ENCODE measurements at regions of chr14 and their contacts with region 1.

Region 1: DNA sequence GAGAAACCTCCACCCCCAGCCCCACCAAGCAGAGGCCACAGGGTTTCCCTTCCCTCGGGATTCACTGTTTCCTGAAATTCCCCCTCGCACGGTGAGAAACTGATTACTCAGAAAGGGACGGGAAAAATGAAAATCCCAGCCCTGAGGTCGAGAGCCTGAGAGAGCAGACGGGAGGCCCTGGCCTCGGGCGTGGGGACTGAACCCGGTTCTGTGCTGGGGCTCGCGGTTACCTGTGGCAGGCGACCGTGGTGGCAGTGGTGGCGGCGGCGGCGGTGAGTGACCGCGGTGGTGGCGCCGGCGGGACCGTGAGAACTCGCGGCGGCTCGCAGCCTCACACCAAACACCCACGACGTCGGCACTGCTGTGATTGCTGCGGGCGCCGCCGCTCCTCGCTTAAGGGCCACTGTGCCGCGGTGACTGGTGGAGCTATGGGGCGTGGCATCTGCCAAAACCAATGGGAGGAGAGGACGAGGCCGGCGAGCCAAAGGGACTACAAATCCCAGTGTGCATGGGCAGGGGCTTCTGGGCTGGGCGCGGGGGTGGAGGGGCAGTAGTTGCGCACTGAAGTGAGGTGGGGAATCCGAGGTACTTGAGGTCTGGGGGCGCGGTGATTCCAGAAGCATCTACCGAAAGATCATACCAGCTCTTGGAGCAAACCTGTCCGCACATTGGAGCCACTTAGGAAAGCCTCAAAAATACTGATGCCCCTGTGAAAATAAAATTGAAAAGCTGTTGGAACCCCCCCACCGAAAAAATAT is at the start of gene LGMN:
- DNase-seq: peak; percentile 88
- ATAC-seq: peak; percentile 99
- H3K4me3 ChIP-seq: peak within 1 kb of the TSS; percentile 78 to 92
- H3K27ac ChIP-seq: peak within 1 kb of the TSS; percentile 45; the same call in 1 of the 2 replicates
- H3K4me1 ChIP-seq: peaks cover 6 to 20% of the 10 kb centered on the region in 2 experiments; a peak in 3 of 4 replicates
- H3K27me3 ChIP-seq: no peaks in the 10 kb centered on the region
- CTCF ChIP-seq: no peak
- POLR2A ChIP-seq: peak; percentile 92
- RAD21 ChIP-seq: no peak
- total RNA-seq, gene LGMN: 44.9 TPM

Region 2: GRCh38 chr14:91836119-91836881 is 912.1 kb before region 1 on chr14:
- CTCF ChIA-PET with region 1: no interaction called
- POLR2A ChIA-PET with region 1: no interaction called
- RAD21 ChIA-PET with region 1: no interaction called
- intact Hi-C with region 1: no loop called
- DNase-seq: peak; percentile 56
- ATAC-seq: peak; percentile 97
- H3K4me3 ChIP-seq: peak overlapping the region; percentile 52 to 66
- H3K27ac ChIP-seq: no peak overlapping the region; the same call in 1 of the 2 replicates
- H3K4me1 ChIP-seq: peaks cover 5 to 15% of the 10 kb centered on the region in 2 experiments; a peak in 3 of 4 replicates
- H3K27me3 ChIP-seq: peaks cover 16% of the 10 kb centered on the region; the same call in 1 of the 2 replicates
- CTCF ChIP-seq: no peak
- POLR2A ChIP-seq: no peak
- RAD21 ChIP-seq: no peak

Region 3: DNA sequence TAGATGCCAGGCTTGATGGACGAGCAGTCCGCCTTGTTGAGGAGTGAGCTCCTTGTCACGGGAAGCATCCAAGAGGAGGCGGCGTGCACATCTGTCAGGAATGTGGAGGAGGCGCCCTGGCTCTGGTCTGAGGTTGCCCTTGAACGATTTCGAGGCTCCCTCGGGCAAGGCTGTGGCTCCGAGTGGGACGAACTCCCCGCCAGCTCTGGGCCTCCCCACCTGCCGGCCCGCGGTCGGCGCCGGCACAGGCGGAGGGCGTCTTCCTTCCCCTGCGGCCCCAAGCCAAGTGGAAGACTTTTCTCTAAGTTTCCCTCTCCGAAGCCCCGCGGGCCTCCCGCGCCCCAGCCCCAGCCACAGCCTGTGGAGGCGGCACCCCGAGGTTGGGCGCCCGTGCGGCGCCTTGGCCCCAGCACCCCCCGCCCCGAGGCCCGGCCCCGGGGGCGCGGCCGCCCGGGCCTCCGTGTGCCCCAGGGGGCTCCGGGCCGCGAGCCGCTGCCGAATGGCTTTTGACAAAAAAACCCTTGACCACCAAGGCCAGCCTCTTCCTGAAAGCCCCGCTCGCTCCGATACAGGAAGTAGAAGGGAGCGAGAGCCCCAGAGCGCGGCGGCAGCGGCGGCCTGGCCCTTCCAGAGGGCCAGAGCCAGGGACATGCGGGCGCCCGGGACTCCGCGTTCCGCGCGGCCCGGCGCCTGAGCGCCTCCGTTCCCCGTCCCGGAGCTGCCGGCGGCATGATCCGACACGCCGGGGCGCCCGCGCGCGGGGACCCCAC is 235.0 kb before region 1 on chr14 and contains the start of gene RIN3:
- CTCF ChIA-PET with region 1: no interaction called
- POLR2A ChIA-PET with region 1: no interaction called
- RAD21 ChIA-PET with region 1: no interaction called
- intact Hi-C with region 1: no loop called
- DNase-seq: no peak
- ATAC-seq: peak; percentile 53
- H3K4me3 ChIP-seq: peak within 1 kb of the TSS; percentile 72 to 75
- H3K27ac ChIP-seq: peak within 1 kb of the TSS; percentile 69
- H3K4me1 ChIP-seq: peaks cover 27 to 42% of the 10 kb centered on the region in 2 experiments
- H3K27me3 ChIP-seq: no peaks in the 10 kb centered on the region
- CTCF ChIP-seq: no peak
- POLR2A ChIP-seq: no peak
- RAD21 ChIP-seq: no peak
- total RNA-seq, gene RIN3: 22.2 TPM

Region 4: DNA sequence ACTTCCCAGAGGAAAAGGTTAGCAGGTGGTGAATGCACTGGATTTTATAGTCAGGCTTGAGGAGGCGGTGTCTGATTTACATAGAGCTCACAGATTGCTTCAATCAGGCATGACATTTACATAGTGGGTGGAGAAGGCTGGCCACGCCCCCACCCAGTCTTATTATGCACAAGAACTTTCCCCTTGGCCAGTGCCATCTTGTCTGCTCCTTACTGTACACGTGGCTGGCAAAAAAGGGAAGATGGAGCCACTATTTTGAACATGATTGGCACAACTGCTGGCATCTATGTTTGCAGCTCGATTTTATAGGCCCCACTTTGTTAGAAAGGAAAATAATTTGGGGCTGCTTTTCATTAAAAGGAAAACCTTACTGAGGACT is 10.9 kb after region 1 on chr14:
- CTCF ChIA-PET with region 1: interaction called, 5 read pairs
- POLR2A ChIA-PET with region 1: interaction called, 19 read pairs
- RAD21 ChIA-PET with region 1: no interaction called
- intact Hi-C with region 1: no loop called
- DNase-seq: no peak
- ATAC-seq: peak; percentile 63
- H3K4me3 ChIP-seq: no peak overlapping the region; a peak in 1 of 4 replicates
- H3K27ac ChIP-seq: peak overlapping the region; percentile 54; the same call in 1 of the 2 replicates
- H3K4me1 ChIP-seq: peaks cover 10 to 41% of the 10 kb centered on the region in 2 experiments
- H3K27me3 ChIP-seq: no peaks in the 10 kb centered on the region
- CTCF ChIP-seq: no peak
- POLR2A ChIP-seq: no peak
- RAD21 ChIP-seq: no peak

Region 5: DNA sequence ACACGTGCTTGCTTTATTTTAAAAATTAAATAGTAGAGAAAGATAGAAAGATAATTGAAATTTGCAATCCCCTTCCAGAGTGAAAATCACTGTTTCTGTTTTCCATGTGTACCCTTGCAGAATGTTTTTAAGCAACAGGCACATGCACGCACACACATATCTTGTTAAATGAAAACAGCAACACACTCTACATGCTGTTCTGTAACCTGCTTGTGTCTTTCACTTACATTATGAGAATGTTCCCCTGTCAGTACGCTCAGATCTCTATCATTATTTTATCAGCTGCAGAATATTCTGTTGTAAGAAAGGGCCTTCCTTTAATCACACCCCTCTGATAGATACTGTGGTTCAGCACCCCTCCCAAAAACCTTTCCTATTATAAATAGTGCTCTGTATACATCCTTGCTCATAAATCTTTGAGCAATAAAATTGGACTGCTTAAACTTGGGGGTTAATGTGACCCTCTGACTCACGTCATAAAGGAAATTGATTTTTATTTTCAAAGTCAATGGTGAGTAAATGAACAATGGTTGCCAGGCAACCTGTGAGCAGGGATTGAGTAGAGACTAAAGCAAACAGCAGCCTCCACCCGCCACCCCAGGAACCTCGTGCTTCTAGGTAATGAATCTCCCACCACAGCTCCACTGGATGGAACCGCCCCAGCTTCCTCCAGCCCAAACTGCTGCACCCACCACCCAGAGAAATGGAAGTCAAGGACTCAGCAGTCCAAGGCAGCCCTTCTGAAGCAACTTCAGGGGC is 142.6 kb after region 1 on chr14:
- CTCF ChIA-PET with region 1: no interaction called
- POLR2A ChIA-PET with region 1: no interaction called
- RAD21 ChIA-PET with region 1: no interaction called
- intact Hi-C with region 1: no loop called
- DNase-seq: no peak
- ATAC-seq: no peak
- H3K4me3 ChIP-seq: no peak overlapping the region
- H3K27ac ChIP-seq: no peak overlapping the region
- H3K4me1 ChIP-seq: no peaks in the 10 kb centered on the region
- H3K27me3 ChIP-seq: peaks cover 13% of the 10 kb centered on the region
- CTCF ChIP-seq: no peak
- POLR2A ChIP-seq: no peak
- RAD21 ChIP-seq: no peak